ENCODE measurements at regions of chr12 and their contacts with region 1.

Region 1: GRCh38 chr12:93569656-93570551 is 2.6 kb upstream of the SOCS2 start:
- DNase-seq: peak; percentile 90
- H3K4me3 ChIP-seq: peak overlapping the region; percentile 71 to 97
- H3K27ac ChIP-seq: peak overlapping the region; percentile 90 to 92
- H3K4me1 ChIP-seq: peaks cover 0 to 17% of the 10 kb centered on the region in 2 experiments; a peak in 1 of 4 replicates
- H3K27me3 ChIP-seq: no peaks in the 10 kb centered on the region
- CTCF ChIP-seq: peak; percentile 72
- EP300 ChIP-seq: peak in 1 of 2 experiments; percentile 9; a peak in 1 of 4 replicates
- RAD21 ChIP-seq: peak; percentile 83

Region 2: DNA sequence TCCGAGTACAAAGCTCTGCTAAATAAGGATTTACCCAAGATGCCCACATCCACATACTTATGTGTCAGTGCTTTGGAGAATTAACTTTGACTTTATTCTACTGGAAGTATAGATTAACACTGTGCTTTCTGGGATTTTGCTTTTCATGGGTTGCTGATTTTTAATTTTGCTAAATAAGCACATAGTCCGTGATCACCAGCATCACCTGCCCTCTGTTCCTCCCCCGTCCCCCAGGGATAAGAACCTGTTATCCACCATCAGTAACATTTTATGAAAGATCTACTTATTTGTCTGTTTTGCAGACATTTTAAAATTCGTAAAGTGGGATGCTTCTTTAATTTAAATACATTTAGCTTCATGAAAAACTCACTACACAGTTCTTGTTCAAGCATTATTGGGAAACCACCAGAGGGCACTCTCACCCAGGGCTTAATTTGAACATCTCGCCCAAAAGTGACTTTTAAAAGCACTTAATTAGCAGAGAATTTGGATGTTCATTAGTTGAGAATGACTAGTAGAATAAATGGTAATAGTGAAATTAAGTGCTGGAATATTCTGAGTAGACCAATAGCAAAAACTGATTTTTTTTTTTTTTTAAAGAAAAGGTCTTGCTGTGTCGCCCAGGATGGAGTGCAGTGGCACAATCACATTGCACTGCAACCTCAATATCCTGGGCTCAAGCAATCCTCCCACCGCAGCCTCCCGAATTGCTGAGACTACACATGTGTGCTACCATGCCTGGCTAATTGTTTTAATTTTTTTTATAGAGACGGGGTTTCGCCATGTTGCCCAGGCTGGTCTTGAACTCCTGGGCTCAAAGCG is 66.9 kb before region 1 on chr12:
- CTCF ChIA-PET with region 1: interaction called, 28 read pairs
- POLR2A ChIA-PET with region 1: no interaction called
- DNase-seq: peak; percentile 26
- H3K4me3 ChIP-seq: no peak overlapping the region
- H3K27ac ChIP-seq: no peak overlapping the region
- H3K4me1 ChIP-seq: peaks cover 0 to 2% of the 10 kb centered on the region in 2 experiments; a peak in 1 of 4 replicates
- H3K27me3 ChIP-seq: no peaks in the 10 kb centered on the region
- CTCF ChIP-seq: peak; percentile 96
- EP300 ChIP-seq: no peak
- RAD21 ChIP-seq: peak; percentile 82

Region 3: DNA sequence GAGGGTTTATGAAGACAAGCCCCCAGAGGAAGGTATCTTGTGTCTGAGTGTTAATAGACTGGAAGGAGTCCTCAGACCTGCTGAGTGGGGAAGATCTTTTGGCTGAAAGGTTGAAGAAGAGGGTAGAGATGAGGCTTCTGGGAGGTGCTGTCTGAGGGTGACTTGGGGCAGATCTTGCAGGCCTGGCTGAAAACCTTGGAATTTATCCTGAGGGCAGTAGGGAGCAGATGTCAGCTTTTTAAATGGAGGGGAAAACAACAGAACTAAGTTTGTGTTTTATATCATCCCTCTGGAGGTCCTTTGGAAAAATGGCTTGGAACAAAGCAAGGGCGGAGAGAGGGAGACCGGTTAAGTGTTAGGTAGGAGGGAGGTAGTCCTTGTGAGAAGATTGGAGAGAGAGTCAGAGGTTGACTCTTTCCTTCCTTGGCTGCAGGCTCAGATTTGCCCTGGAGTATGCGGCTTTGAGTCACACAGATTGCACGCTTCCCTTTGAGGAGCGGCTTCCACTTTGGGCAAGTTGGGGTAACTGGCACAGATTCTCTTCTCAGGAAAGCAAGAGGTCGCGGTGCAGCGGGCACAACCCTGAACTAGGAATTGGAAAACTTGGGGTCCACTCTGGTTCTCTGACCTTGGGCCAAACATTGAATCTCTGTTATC is 12.3 kb after region 1 on chr12:
- CTCF ChIA-PET with region 1: interaction called, 10 read pairs
- POLR2A ChIA-PET with region 1: no interaction called
- DNase-seq: no peak
- H3K4me3 ChIP-seq: no peak overlapping the region
- H3K27ac ChIP-seq: no peak overlapping the region
- H3K4me1 ChIP-seq: no peaks in the 10 kb centered on the region; a peak in 2 of 4 replicates
- H3K27me3 ChIP-seq: no peaks in the 10 kb centered on the region
- CTCF ChIP-seq: no peak
- EP300 ChIP-seq: no peak
- RAD21 ChIP-seq: no peak

Region 4: DNA sequence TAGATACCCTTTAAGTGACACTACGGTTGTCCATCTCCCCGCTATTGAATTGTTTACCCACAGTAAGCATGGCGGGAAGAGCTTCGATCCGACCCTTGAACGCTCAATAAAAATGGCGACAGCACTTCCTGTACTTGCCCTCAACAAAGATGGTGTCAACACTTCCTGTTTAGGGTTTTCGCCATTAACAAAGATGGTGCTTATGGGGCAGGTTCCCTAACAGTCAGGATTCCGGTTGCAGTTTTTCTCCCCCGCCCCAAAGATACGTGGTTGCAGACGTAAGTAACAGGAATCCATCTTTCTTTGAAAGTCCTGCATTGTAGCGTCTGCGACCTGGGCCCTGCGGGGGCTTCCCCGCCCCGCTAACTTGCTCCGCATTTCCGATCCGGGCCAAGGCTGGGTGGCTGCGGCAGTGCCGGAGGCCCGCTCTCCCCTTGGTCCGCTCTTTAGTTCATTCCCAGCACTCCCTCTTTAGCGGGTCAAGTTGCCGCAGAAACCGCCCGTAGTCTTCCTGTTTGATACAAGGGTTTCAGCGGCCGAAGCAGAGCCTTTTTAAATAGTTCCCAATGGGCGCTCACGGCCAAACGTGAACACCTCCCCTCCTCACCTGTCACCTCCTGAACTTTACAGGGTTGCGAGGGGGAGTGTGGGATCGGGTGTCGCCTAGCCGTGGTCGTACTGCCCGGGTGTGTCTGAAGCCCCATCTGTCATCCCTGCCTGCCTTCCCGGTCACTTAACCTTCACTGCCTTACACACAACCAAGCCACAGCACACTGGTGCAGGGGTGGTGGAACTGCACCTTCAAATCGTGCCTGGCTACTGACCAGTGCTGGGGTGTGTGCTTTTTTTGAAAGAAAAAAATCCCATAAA is 107.5 kb after region 1 on chr12 and contains the start of gene CRADD:
- CTCF ChIA-PET with region 1: interaction called, 4 read pairs
- POLR2A ChIA-PET with region 1: interaction called, 10 read pairs
- DNase-seq: peak; percentile 76
- H3K4me3 ChIP-seq: peak within 1 kb of the TSS; percentile 72 to 78
- H3K27ac ChIP-seq: peak within 1 kb of the TSS; percentile 99
- H3K4me1 ChIP-seq: peaks cover 0 to 23% of the 10 kb centered on the region in 2 experiments; a peak in 2 of 4 replicates
- H3K27me3 ChIP-seq: no peaks in the 10 kb centered on the region
- CTCF ChIP-seq: no peak
- EP300 ChIP-seq: peak in 1 of 2 experiments; percentile 40; a peak in 1 of 4 replicates
- RAD21 ChIP-seq: peak; percentile 8; the same call in 1 of the 2 replicates
- polyA plus RNA-seq, gene CRADD: 13.6 and 16.7 TPM in 2 replicates

Region 5: GRCh38 chr12:93742110-93742934 is 172.4 kb after region 1 on chr12:
- CTCF ChIA-PET with region 1: interaction called, 27 read pairs
- POLR2A ChIA-PET with region 1: interaction called, 3 read pairs
- DNase-seq: peak; percentile 93
- H3K4me3 ChIP-seq: peak overlapping the region; percentile 68 to 73
- H3K27ac ChIP-seq: peak overlapping the region; percentile 90 to 97
- H3K4me1 ChIP-seq: peaks cover 6 to 9% of the 10 kb centered on the region in 2 experiments; a peak in 2 of 4 replicates
- H3K27me3 ChIP-seq: no peaks in the 10 kb centered on the region
- CTCF ChIP-seq: peak; percentile 50
- EP300 ChIP-seq: 0 out of 4 replicates have a peak, but pooled peaks of 1 of the 2 experiments have one; percentile 6
- RAD21 ChIP-seq: peak; percentile 47

Region 6: DNA sequence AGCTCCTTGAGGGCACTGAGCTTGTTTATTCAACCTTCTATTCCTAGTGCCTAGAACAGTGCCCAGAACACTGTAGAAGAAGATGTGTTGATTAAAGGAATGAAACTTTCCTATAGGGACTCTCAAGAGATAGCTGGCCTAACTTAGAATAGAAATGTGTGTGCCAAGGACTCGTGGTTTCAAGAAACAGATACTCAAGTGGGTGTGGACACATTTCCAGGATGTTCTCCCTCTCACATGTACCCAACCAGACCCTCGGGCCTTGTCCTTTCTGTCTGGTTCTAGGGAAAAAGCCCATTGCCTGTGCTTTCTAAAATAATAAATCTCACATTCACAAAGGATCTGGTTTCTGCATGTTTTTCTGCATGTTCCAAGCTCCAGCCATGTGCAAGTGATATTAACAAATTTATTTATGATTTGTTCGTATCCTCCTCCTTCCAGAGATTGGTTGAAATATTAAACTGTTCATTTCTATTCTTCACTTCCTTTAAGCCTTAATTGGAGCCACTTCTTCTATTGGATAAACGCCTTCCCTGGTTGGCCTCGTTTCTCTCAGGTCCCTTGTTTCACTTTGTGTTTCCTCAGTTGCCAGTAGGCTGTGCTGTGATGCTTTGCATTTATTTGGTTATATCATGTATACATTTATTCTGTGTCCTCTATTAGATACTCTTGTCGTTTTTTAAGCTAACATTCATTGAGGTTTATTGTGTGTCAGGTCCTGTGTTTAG is 197.1 kb after region 1 on chr12:
- CTCF ChIA-PET with region 1: interaction called, 19 read pairs
- POLR2A ChIA-PET with region 1: no interaction called
- DNase-seq: peak; percentile 41
- H3K4me3 ChIP-seq: no peak overlapping the region
- H3K27ac ChIP-seq: peak overlapping the region in 1 of 2 experiments; percentile 52; a peak in 2 of 4 replicates
- H3K4me1 ChIP-seq: peaks cover 0 to 21% of the 10 kb centered on the region in 2 experiments; a peak in 3 of 4 replicates
- H3K27me3 ChIP-seq: no peaks in the 10 kb centered on the region
- CTCF ChIP-seq: peak; percentile 76
- EP300 ChIP-seq: no peak
- RAD21 ChIP-seq: peak; percentile 87

Region 7: DNA sequence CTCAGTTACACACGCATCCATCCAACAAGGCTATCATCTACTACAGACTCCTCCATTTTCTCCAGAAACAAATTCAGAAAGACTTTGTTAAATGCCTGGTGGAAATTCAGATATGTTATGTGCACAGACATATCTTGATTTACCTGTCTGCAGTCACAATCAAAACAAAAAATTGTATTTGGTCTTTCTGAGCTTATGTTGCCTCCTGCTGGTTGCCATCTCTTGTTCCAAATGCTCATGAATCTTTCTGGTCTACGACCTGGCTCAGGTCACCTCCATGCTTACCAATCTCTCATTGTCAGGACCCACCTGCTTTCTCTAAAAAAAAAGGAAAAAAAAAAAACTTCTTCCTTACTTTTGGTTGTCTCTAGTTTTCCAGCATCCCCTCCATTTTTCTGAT is 409.3 kb after region 1 on chr12:
- CTCF ChIA-PET with region 1: interaction called, 17 read pairs
- POLR2A ChIA-PET with region 1: no interaction called
- DNase-seq: no peak
- H3K4me3 ChIP-seq: no peak overlapping the region
- H3K27ac ChIP-seq: no peak overlapping the region
- H3K4me1 ChIP-seq: no peaks in the 10 kb centered on the region; a peak in 1 of 4 replicates
- H3K27me3 ChIP-seq: no peaks in the 10 kb centered on the region
- CTCF ChIP-seq: peak; percentile 56
- EP300 ChIP-seq: no peak
- RAD21 ChIP-seq: peak; percentile 82

Measured in SK-N-SH (cell line).